ENCODE measurements at regions of chr16 and their contacts with region 1.

Region 1: DNA sequence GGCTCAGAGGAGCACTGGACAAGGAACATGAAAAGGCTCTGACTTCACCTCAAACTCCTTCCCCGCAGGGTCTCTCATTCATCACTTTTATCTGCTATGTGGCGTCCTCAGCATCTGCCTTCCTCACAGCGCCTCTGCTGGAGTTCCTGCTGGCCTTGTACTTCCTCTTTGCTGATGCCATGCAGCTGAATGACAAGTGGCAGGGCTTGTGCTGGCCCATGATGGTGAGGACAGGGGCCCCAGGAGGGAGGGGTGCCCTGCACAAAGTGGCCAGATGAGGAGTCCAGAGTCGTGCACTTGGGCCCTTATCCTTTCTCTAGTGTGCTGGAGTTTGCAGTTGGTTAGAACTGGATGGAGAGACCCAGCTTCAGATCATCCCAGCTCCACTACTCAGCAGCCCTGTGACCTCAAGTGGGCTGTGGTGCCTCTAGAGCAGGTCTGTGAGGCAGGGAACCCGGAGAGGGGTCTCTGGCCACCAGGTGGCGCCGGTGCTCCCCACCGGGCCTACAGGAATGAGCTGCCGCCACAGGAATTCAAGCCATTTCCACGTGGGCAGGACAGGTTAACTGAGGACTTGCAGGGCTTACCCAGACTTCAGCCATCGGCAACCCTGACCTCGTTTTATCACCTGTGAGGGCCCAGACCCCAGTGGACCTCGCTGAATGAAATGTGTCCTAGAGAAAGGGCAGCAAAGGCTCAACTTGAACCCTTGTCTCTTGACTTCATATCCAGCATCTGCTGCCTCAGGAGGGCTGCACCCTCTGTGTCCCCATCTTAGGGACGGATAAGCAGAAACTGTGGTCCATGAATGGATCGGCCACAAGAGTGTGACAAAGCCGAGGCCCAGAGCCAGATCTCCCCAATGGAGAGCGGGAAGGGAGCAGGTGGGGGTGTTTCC is 4.0 kb downstream of the CMTM3 start:
- DNase-seq: peak; percentile 92
- ATAC-seq: peak; percentile 50
- H3K4me3 Mint-ChIP-seq: no peak overlapping the region
- H3K27ac Mint-ChIP-seq: peak overlapping the region; percentile 78
- H3K4me1 Mint-ChIP-seq: peaks cover 35% of the 10 kb centered on the region
- H3K27me3 Mint-ChIP-seq: no peaks in the 10 kb centered on the region

Region 2: DNA sequence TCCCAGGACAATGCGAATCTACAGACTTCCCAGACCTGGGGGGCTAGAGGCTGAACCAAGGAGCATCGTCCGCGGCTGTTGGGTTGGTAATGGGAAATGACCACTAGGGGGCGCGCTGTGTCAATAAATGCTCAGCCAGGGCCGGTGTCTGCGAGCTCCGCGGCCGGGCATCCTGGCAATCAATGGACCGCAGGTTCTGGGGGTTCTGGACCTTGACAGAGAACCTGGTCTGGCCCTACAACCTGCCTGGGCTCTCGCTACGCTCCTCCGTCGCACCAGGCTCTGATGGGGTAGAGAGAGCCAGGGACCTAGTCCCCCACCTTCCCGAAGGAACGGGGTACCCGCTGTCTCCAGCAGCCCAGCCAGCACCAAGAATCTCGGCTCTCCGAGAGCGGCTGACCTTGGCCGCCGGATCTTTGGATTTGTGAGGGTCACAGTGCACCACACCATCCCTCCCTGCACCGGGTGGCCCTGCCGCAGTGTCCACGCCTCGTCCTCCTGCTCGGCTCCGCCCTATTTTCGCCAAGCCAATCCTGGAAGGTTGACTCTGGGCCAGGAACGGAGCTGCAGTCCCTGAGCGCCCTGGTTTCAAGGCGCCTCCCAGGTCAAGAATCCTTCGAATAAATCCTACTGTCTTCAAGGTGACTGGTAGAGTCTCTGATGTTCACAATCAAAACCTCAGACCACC is 201.8 kb before region 1 on chr16:
- CTCF ChIA-PET with region 1: interaction called, 25 read pairs
- POLR2A ChIA-PET with region 1: interaction called, 3 read pairs
- intact Hi-C with region 1: loop called (anchors 1 kb)
- DNase-seq: peak; percentile 94
- ATAC-seq: peak; percentile 82
- H3K4me3 Mint-ChIP-seq: peak overlapping the region; percentile 72
- H3K27ac Mint-ChIP-seq: peak overlapping the region; percentile 12
- H3K4me1 Mint-ChIP-seq: peaks cover 24% of the 10 kb centered on the region
- H3K27me3 Mint-ChIP-seq: peaks cover 4% of the 10 kb centered on the region

Region 3: GRCh38 chr16:66427036-66427860 is 181.2 kb before region 1 on chr16 and contains the start of gene BEAN1:
- CTCF ChIA-PET with region 1: no interaction called
- POLR2A ChIA-PET with region 1: no interaction called
- intact Hi-C with region 1: no loop called
- DNase-seq: no peak
- ATAC-seq: peak; percentile 34
- H3K4me3 Mint-ChIP-seq: peak within 1 kb of the TSS; percentile 34
- H3K27ac Mint-ChIP-seq: no peak within 1 kb of the TSS
- H3K4me1 Mint-ChIP-seq: no peaks in the 10 kb centered on the region
- H3K27me3 Mint-ChIP-seq: peaks cover 45% of the 10 kb centered on the region
- total RNA-seq, gene BEAN1: not detected

Region 4: DNA sequence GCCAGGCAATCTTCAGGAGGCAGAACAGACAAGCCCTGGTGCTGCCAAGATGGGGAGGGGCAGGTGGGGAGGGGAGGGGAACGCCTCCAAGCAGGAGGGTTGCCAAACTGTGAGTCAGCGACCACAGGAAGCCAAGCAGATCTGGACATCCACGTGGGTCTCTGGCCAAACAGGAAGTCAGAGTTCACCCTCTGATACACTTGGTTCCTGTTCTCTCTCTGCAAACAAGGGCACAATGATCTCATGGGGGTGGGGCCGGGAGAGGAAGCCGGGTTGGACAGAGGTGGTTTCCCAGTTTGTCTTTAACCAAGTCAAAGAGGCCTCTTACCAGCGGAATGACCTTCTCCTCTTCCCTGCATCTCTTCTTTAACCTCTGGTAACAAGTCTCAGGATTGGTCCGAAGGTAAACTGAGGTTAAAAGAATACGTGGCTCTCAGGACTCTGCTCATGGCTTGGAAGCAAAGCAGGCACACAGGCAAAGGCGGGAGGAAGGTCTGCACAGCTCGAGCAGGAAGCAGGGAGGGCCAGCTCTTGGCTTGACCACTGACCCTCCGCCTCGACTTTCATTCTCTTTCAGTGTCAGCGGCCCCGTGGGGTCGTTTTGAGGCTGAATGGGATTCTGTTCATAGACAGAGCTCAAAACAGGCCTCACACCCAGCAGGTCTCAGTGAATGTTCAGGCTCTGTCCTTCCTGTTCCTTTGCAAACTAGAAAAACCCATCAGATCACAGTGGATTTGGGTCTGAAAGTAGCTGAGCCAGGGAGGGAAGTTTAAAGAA is 91.5 kb before region 1 on chr16:
- CTCF ChIA-PET with region 1: interaction called, 11 read pairs
- POLR2A ChIA-PET with region 1: no interaction called
- intact Hi-C with region 1: loop called in 1 of 2 experiments (anchors 1 kb)
- DNase-seq: peak; percentile 91
- ATAC-seq: peak; percentile 90
- H3K4me3 Mint-ChIP-seq: peak overlapping the region; percentile 65
- H3K27ac Mint-ChIP-seq: peak overlapping the region; percentile 92
- H3K4me1 Mint-ChIP-seq: peaks cover 66% of the 10 kb centered on the region
- H3K27me3 Mint-ChIP-seq: no peaks in the 10 kb centered on the region

Region 5: DNA sequence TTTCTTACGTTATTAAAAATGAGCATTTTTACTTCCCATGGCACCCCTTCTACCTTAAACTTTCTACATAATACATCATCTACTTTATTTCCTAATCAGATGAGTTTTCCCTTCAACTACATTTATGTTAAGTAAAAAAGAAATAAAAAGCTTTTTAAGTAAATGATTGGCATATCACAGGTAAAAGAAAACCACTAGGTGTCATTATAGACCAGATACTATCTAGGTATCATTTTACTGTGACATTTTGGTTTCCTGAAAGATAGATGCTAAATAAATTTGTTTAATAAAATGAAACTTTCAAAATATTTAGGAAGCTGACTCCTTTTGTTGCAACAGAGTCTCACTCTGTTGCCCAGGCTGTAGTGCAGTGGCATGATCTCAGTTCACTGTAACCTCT is 46.1 kb before region 1 on chr16:
- CTCF ChIA-PET with region 1: interaction called, 28 read pairs
- POLR2A ChIA-PET with region 1: no interaction called
- intact Hi-C with region 1: loop called (anchors 1 to 2 kb)
- DNase-seq: no peak
- ATAC-seq: no peak
- H3K4me3 Mint-ChIP-seq: no peak overlapping the region
- H3K27ac Mint-ChIP-seq: no peak overlapping the region
- H3K4me1 Mint-ChIP-seq: peaks cover 65% of the 10 kb centered on the region
- H3K27me3 Mint-ChIP-seq: no peaks in the 10 kb centered on the region

Region 6: GRCh38 chr16:66639091-66639885 is 30.8 kb after region 1 on chr16:
- CTCF ChIA-PET with region 1: no interaction called
- POLR2A ChIA-PET with region 1: no interaction called
- intact Hi-C with region 1: no loop called
- DNase-seq: no peak
- ATAC-seq: no peak
- H3K4me3 Mint-ChIP-seq: no peak overlapping the region
- H3K27ac Mint-ChIP-seq: no peak overlapping the region
- H3K4me1 Mint-ChIP-seq: no peaks in the 10 kb centered on the region
- H3K27me3 Mint-ChIP-seq: no peaks in the 10 kb centered on the region

Region 7: DNA sequence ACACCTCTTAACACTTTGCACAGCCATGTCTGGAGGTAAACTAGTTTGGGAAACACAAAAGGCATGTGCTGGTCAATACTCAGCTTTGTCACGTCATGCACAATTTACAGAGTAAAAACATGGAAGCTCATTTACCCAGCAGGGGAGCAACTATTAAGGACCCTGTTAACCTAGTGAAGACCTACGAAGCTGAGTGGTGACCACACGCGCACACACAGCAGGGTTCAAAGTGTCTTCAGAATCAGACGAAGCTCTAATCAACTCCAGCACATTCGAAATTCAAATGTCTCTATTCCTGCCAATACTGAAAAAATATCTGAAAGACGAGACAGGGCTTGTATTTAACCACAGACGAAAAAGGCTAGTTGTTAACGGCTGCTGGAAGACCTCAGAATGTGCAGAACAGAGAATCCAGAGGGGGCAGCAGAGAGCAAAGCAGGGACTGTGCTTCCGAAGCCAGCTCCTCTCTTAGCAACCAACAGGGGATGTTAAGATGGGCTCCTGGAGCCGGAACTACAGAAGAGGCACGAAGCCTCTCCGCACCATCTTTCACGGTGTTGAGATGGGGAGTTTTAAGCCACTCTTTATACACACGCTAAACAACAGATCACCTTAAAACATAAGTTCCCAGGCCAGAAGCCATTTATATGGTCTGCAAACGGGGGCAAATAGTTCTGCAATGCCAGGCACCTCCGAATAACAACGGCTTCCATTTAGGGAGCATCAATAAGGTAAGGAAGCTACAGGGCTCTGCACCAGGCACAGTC is 42.4 kb after region 1 on chr16:
- CTCF ChIA-PET with region 1: interaction called, 15 read pairs
- POLR2A ChIA-PET with region 1: no interaction called
- intact Hi-C with region 1: loop called in 1 of 2 experiments (anchors 2 kb)
- DNase-seq: peak; percentile 89
- ATAC-seq: peak; percentile 100
- H3K4me3 Mint-ChIP-seq: peak overlapping the region; percentile 18
- H3K27ac Mint-ChIP-seq: peak overlapping the region; percentile 26
- H3K4me1 Mint-ChIP-seq: peaks cover 10% of the 10 kb centered on the region
- H3K27me3 Mint-ChIP-seq: no peaks in the 10 kb centered on the region

Region 8: GRCh38 chr16:66872943-66873684 is 264.6 kb after region 1 on chr16:
- CTCF ChIA-PET with region 1: interaction called, 9 read pairs
- POLR2A ChIA-PET with region 1: no interaction called
- intact Hi-C with region 1: loop called (anchors 1 to 5 kb)
- DNase-seq: peak; percentile 95
- ATAC-seq: peak; percentile 77
- H3K4me3 Mint-ChIP-seq: peak overlapping the region; percentile 65
- H3K27ac Mint-ChIP-seq: peak overlapping the region; percentile 72
- H3K4me1 Mint-ChIP-seq: peaks cover 48% of the 10 kb centered on the region
- H3K27me3 Mint-ChIP-seq: no peaks in the 10 kb centered on the region

Measured in activated CD4-positive, alpha-beta T cell treated with anti-CD3 and anti-CD28 coated beads for 36 hours (primary cell).